Panc1 (cell line): ENCODE measurements at regions of chr15 and their contacts with region 1.

Region 1: GRCh38 chr15:37253877-37254276 is 153.5 kb upstream of the MEIS2 start:
- DNase-seq: no peak
- ATAC-seq: no peak
- H3K4me3 ChIP-seq: no peak overlapping the region
- H3K27ac ChIP-seq: no peak overlapping the region
- H3K4me1 ChIP-seq: no peaks in the 10 kb centered on the region
- H3K27me3 ChIP-seq: no peaks in the 10 kb centered on the region
- CTCF ChIP-seq: no peak

Region 2: GRCh38 chr15:37199545-37199944 is 54.3 kb before region 1 on chr15:
- CTCF ChIA-PET with region 1: no interaction called
- POLR2A ChIA-PET with region 1: no interaction called
- in situ Hi-C with region 1: no loop called
- intact Hi-C with region 1: loop called (anchors 10 kb)
- DNase-seq: no peak
- ATAC-seq: no peak
- H3K4me3 ChIP-seq: no peak overlapping the region
- H3K27ac ChIP-seq: no peak overlapping the region
- H3K4me1 ChIP-seq: no peaks in the 10 kb centered on the region
- H3K27me3 ChIP-seq: no peaks in the 10 kb centered on the region
- CTCF ChIP-seq: no peak

Region 3: GRCh38 chr15:37731146-37731746 is 477.4 kb after region 1 on chr15:
- CTCF ChIA-PET with region 1: no interaction called
- POLR2A ChIA-PET with region 1: no interaction called
- in situ Hi-C with region 1: no loop called
- intact Hi-C with region 1: no loop called
- DNase-seq: no peak
- ATAC-seq: no peak
- H3K4me3 ChIP-seq: no peak overlapping the region
- H3K27ac ChIP-seq: no peak overlapping the region
- H3K4me1 ChIP-seq: no peaks in the 10 kb centered on the region
- H3K27me3 ChIP-seq: no peaks in the 10 kb centered on the region
- CTCF ChIP-seq: no peak